Mammary epithelial cell (primary cell): ENCODE measurements at regions of chr10 and their contacts with region 1.

Region 1: DNA sequence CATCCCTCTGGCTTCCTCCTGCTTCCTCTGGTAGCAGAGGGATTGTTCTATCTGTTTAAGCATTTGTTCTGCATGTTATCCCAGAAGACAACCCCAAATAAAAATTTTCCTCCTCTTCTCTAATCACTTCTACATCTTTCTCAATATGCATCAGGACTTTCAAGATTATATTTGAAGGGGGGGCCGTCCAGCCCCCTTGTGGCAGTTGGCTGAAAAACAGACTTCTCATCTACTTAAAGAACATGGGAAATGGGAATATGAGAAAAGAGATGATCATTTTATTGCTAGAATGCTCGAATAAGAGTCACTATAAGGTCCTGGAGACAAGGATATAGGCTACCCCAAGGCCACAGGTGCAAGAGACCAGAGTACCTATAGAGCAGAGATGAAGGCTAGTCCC is 466.0 kb downstream of the REEP3 start:
- DNase-seq: no peak
- H3K4me3 ChIP-seq: no peak overlapping the region
- H3K27ac ChIP-seq: no peak overlapping the region
- H3K4me1 ChIP-seq: no peaks in the 10 kb centered on the region
- H3K27me3 ChIP-seq: no peaks in the 10 kb centered on the region
- CTCF ChIP-seq: no peak

Region 2: DNA sequence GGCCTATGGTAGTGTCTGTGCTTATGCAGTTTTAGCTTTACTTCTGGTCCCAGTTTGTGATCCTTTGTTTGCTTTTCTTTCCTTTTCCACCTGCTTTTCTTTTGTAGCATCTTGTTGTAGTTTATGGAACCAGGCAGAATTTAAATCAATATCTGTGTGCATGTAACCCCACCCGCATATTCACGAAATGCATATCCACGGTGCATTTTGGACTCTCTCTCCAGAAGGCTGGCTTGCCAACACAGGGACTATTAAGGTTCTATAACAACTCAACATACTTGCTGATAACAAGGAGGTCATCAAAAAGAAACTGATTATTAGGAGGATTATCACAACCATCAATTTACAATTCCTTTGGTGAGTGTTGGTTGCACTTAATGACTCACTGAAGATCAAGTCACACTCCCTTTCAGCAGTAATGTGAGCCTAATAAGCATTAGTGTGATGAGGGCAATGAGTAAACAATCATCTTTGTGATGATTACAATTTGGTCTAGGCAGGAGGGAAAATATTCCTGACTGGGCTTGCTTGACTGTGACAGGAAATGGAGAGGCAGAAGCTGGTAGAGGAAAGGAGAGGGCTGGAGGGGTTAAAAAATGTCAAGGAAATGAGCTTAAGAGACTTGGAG is 87.4 kb before region 1 on chr10:
- CTCF ChIA-PET with region 1: no interaction called
- dilution Hi-C with region 1: loop called (anchors 5 kb)
- in situ Hi-C with region 1: no loop called
- intact Hi-C with region 1: no loop called
- DNase-seq: no peak
- H3K4me3 ChIP-seq: no peak overlapping the region
- H3K27ac ChIP-seq: no peak overlapping the region
- H3K4me1 ChIP-seq: no peaks in the 10 kb centered on the region
- H3K27me3 ChIP-seq: no peaks in the 10 kb centered on the region
- CTCF ChIP-seq: no peak